Activated T-helper 2 cell treated with anti-CD3 and anti-CD28 coated beads, Interferon-gamma antibody, Interleukin-2, Interleukin-4, amounts not matched to agents 10 μg/mL and 5 μg/mL and 100 μg/mL, durations not matched to agents 14 hours and 24 hours and 36 hours (primary cell): ENCODE measurements at regions of chr11 and their contacts with region 1.

Region 1: DNA sequence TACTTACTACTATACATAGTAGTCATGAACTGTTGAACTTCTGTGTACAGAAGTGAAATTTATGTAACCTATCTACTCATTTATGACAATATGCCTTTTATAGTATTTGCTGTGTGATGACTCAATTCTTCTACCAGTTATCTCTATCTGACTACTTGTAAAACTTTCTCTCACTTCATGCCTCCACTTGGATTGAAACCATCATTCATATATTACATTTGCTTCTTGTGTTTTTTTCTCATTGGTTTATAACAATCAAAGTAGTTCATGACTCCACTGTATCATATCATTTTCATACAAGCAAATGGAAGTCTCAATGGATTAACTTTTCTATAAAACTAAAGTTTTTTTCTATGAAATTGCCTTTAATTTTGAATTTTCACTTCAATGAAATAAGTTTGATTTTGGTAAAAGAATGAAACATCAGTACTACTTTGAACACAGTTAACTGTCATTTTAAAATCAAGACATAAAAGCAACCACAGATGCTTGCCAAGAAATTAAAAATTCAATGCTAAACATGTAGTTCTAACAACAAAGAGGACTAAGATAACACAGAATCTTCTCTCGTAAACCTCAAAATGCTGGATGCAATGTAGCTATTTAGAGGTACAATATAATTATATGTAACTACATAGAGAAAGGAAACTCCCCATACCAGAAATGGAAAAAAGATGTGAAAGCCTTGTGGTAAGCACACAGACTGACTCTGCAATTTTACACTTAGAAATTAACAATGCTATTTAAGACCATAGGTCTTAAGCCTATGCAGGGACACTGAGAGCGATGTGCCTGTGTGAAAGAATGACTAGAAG is 27.6 kb upstream of the EXPH5 start:
- DNase-seq: no peak
- H3K4me3 Mint-ChIP-seq: no peak overlapping the region
- H3K27ac Mint-ChIP-seq: no peak overlapping the region
- H3K4me1 Mint-ChIP-seq: peaks cover 32% of the 10 kb centered on the region
- H3K27me3 Mint-ChIP-seq: peaks cover 35% of the 10 kb centered on the region

Region 2: GRCh38 chr11:108199446-108200321 is 421.5 kb before region 1 on chr11:
- intact Hi-C with region 1: loop called (anchors 1 kb)
- DNase-seq: no peak
- H3K4me3 Mint-ChIP-seq: no peak overlapping the region
- H3K27ac Mint-ChIP-seq: peak overlapping the region; percentile 73
- H3K4me1 Mint-ChIP-seq: peaks cover 42% of the 10 kb centered on the region
- H3K27me3 Mint-ChIP-seq: no peaks in the 10 kb centered on the region

Region 3: GRCh38 chr11:108237058-108237481 is 384.1 kb before region 1 on chr11:
- intact Hi-C with region 1: loop called (anchors 1 kb)
- DNase-seq: no peak
- H3K4me3 Mint-ChIP-seq: peak overlapping the region; percentile 66
- H3K27ac Mint-ChIP-seq: peak overlapping the region; percentile 83
- H3K4me1 Mint-ChIP-seq: peaks cover 59% of the 10 kb centered on the region
- H3K27me3 Mint-ChIP-seq: no peaks in the 10 kb centered on the region

Region 4: GRCh38 chr11:108497317-108498045 is 123.7 kb before region 1 on chr11:
- intact Hi-C with region 1: loop called (anchors 2 kb)
- DNase-seq: peak; percentile 68
- H3K4me3 Mint-ChIP-seq: peak overlapping the region; percentile 93
- H3K27ac Mint-ChIP-seq: peak overlapping the region; percentile 98
- H3K4me1 Mint-ChIP-seq: peaks cover 23% of the 10 kb centered on the region
- H3K27me3 Mint-ChIP-seq: peaks cover 4% of the 10 kb centered on the region

Region 5: GRCh38 chr11:108524434-108524833 is 96.7 kb before region 1 on chr11:
- intact Hi-C with region 1: no loop called
- DNase-seq: no peak
- H3K4me3 Mint-ChIP-seq: no peak overlapping the region
- H3K27ac Mint-ChIP-seq: no peak overlapping the region
- H3K4me1 Mint-ChIP-seq: no peaks in the 10 kb centered on the region
- H3K27me3 Mint-ChIP-seq: no peaks in the 10 kb centered on the region

Region 6: DNA sequence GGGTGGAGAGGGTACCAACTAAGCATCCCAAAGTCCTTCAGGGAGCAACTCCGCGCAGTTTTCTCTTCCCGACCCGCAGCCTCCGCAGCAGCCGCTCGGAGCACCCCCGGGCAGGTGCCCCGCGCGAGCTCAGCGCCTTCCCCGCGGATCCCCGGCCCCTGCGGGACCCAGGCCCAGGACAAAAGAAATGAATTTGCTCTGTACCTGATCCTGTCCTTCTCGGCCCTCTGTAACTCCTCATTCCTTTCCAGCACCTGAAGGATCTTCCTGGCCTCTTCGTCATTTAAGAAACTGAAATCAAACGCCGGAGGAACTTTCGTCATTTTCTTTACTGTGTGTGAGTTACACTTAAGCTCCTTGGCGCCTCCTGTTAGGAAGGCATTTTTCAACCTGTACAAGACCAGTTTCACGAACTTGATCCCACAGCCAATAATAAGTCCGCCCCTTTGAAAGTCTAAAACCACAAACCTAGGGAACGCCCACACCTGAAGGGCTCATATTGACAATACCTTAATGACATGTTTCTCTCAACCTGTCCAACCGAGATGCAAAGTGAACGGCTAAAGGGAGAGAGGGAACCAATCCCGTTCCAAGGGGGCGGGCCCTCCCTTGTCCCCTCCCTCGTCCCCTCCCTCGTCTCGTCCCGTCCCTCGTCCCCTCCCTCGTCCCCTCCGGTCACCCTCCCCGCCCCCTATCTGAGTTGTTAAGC is 27.8 kb before region 1 on chr11 and contains the start of gene EXPH5:
- intact Hi-C with region 1: loop called (anchors 1 kb)
- DNase-seq: peak; percentile 75
- H3K4me3 Mint-ChIP-seq: peak within 1 kb of the TSS; percentile 98
- H3K27ac Mint-ChIP-seq: peak within 1 kb of the TSS; percentile 91
- H3K4me1 Mint-ChIP-seq: peaks cover 17% of the 10 kb centered on the region
- H3K27me3 Mint-ChIP-seq: peaks cover 53% of the 10 kb centered on the region
- total RNA-seq, gene EXPH5: 1.2 and 1.8 TPM in 2 replicates

Region 7: GRCh38 chr11:108727665-108728064 is 106.5 kb after region 1 on chr11:
- intact Hi-C with region 1: loop called (anchors 2 kb)
- DNase-seq: no peak
- H3K4me3 Mint-ChIP-seq: no peak overlapping the region
- H3K27ac Mint-ChIP-seq: peak overlapping the region; percentile 67
- H3K4me1 Mint-ChIP-seq: peaks cover 45% of the 10 kb centered on the region
- H3K27me3 Mint-ChIP-seq: no peaks in the 10 kb centered on the region

Region 8: GRCh38 chr11:110092515-110093404 is 1471.6 kb after region 1 on chr11 and contains the start of gene ZC3H12C:
- intact Hi-C with region 1: loop called (anchors 10 kb)
- DNase-seq: peak; percentile 38
- H3K4me3 Mint-ChIP-seq: peak within 1 kb of the TSS; percentile 89
- H3K27ac Mint-ChIP-seq: peak within 1 kb of the TSS; percentile 95
- H3K4me1 Mint-ChIP-seq: peaks cover 36% of the 10 kb centered on the region
- H3K27me3 Mint-ChIP-seq: peaks cover 32% of the 10 kb centered on the region
- total RNA-seq, gene ZC3H12C: 16.7 and 17.5 TPM in 2 replicates